Mammary epithelial cell (primary cell): ENCODE measurements at regions of chr15 and their contacts with region 1.

Region 1: DNA sequence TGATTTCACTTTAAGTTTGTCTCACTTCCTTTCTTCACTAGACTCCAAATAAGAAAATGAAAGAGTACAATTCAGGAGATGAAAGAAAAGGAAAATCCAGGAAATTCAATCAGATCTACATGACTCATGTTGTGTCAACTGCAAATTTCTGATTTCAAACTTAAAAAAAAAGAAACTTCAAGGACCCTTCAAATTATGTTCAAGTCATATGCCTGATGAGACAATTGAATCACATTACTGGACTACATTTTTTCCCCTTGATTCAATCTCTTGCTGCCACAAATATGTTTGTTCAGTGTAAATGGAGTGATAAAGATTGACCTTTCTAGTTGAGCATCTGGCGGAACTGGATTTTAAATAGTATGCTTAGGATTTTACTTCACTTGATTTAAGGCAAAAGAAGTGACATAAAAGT is 37.4 kb downstream of the FRMD5 start:
- DNase-seq: peak; percentile 85
- H3K4me3 ChIP-seq: no peak overlapping the region
- H3K27ac ChIP-seq: peak overlapping the region; percentile 57
- H3K4me1 ChIP-seq: peaks cover 25% of the 10 kb centered on the region
- H3K27me3 ChIP-seq: no peaks in the 10 kb centered on the region
- CTCF ChIP-seq: no peak

Region 2: DNA sequence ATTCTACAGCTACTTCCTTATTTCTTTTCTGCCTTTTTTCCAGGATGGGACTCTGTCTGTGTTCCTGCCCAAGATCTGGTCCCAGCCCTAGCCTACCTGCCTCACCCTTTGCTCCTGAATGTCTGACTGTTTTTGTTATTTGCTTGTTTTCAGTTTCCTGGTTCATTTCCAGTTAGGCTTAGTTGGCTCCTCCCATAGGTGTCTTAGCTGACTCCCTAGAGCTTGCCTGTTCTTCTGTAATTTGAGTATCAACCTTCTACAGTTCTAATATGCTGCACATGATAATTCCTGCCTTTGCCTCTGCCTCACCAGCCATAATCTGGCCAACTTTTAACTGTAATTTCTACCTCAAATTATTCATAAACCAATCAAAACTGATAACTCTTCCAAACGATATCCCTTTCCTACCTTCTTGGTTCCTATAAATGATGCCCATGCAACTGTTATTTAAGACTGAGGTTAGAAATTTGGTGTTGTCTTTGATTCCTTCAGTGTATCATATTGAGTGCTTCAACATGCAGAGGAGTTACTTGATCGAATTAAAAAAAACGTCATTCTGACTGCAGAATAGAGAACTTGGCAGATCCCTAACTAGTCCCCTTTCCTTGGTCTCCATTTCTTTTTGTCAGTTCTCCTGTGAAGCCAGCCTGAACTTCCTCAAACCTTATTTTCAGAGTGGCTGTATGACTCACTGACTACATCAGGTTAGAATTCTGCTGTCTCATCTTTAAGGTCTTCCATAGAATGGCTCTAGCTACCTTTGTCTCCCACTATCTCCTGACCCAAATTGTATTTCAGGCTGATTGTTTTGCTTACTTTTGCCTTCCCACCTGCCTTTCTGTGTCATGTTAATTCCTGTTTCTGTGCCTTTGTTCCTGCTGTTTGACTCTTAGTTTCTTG is 139.2 kb after region 1 on chr15:
- CTCF ChIA-PET with region 1: no interaction called
- dilution Hi-C with region 1: no loop called
- in situ Hi-C with region 1: no loop called
- intact Hi-C with region 1: loop called (anchors 10 kb)
- DNase-seq: peak; percentile 61
- H3K4me3 ChIP-seq: no peak overlapping the region
- H3K27ac ChIP-seq: peak overlapping the region; percentile 71
- H3K4me1 ChIP-seq: peaks cover 26% of the 10 kb centered on the region
- H3K27me3 ChIP-seq: no peaks in the 10 kb centered on the region
- CTCF ChIP-seq: no peak